CD8-positive, alpha-beta T cell (primary cell): ENCODE measurements at regions of chr20 and their contacts with region 1.

Region 1: GRCh38 chr20:50115591-50116372 is 2.8 kb upstream of the UBE2V1 start:
- DNase-seq: peak; percentile 75 to 95 (median 90)
- ATAC-seq: peak; percentile 78
- H3K4me3 ChIP-seq: peak overlapping the region; percentile 47 to 55
- H3K4me3 Mint-ChIP-seq: peak overlapping the region; percentile 87
- H3K27ac ChIP-seq: peak overlapping the region; percentile 22 to 25
- H3K27ac Mint-ChIP-seq: peak overlapping the region; percentile 84
- H3K4me1 ChIP-seq: peaks cover 39% of the 10 kb centered on the region
- H3K4me1 Mint-ChIP-seq: peaks cover 53% of the 10 kb centered on the region
- H3K27me3 ChIP-seq: no peaks in the 10 kb centered on the region
- H3K27me3 Mint-ChIP-seq: no peaks in the 10 kb centered on the region
- CTCF ChIP-seq: no peak

Region 2: DNA sequence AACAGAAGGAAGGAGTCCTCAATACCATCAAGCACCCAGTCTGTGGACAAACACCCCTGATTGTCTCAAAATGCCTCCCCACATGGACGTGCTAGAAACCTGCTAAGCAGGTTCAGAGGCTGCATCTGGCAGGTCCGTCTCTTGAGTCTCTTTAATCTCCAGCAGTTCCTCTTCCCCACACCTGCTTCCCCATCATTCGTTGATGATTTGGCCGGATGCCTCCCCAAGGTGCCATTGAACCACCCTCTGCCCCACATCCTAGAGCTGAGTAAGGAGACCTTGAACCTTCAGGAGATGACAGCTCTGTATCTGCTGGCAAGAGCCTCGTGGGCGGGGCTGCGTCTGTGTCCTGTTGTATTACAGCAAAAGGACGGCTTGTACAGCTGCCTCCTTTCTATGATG is 1467.2 kb before region 1 on chr20:
- CTCF ChIA-PET with region 1: no interaction called
- POLR2A ChIA-PET with region 1: no interaction called
- intact Hi-C with region 1: no loop called
- DNase-seq: no peak
- ATAC-seq: no peak
- H3K4me3 ChIP-seq: no peak overlapping the region
- H3K4me3 Mint-ChIP-seq: no peak overlapping the region
- H3K27ac ChIP-seq: no peak overlapping the region
- H3K27ac Mint-ChIP-seq: no peak overlapping the region
- H3K4me1 ChIP-seq: no peaks in the 10 kb centered on the region
- H3K4me1 Mint-ChIP-seq: no peaks in the 10 kb centered on the region
- H3K27me3 ChIP-seq: no peaks in the 10 kb centered on the region
- H3K27me3 Mint-ChIP-seq: no peaks in the 10 kb centered on the region
- CTCF ChIP-seq: no peak

Region 3: GRCh38 chr20:49278036-49278817 is 837.6 kb before region 1 on chr20 and contains the start of gene ZNFX1:
- CTCF ChIA-PET with region 1: no interaction called
- POLR2A ChIA-PET with region 1: no interaction called
- intact Hi-C with region 1: loop called (anchors 5 to 10 kb)
- DNase-seq: peak; percentile 96 to 99 (median 99)
- ATAC-seq: peak; percentile 83
- H3K4me3 ChIP-seq: peak within 1 kb of the TSS; percentile 71 to 84
- H3K4me3 Mint-ChIP-seq: peak within 1 kb of the TSS; percentile 96
- H3K27ac ChIP-seq: peak within 1 kb of the TSS; percentile 84 to 89
- H3K27ac Mint-ChIP-seq: peak within 1 kb of the TSS; percentile 99
- H3K4me1 ChIP-seq: peaks cover 66% of the 10 kb centered on the region
- H3K4me1 Mint-ChIP-seq: peaks cover 67% of the 10 kb centered on the region
- H3K27me3 ChIP-seq: no peaks in the 10 kb centered on the region
- H3K27me3 Mint-ChIP-seq: no peaks in the 10 kb centered on the region
- CTCF ChIP-seq: no peak
- total RNA-seq, gene ZNFX1: 53.8 to 55.0 TPM

Region 4: GRCh38 chr20:50070991-50071888 is 44.5 kb before region 1 on chr20:
- CTCF ChIA-PET with region 1: interaction called, 11 read pairs
- POLR2A ChIA-PET with region 1: no interaction called
- intact Hi-C with region 1: loop called in 1 of 2 experiments (anchors 2 kb)
- DNase-seq: peak; percentile 83 to 98 (median 91)
- ATAC-seq: peak; percentile 100
- H3K4me3 ChIP-seq: peak overlapping the region; percentile 29 to 38
- H3K4me3 Mint-ChIP-seq: peak overlapping the region; percentile 63
- H3K27ac ChIP-seq: no peak overlapping the region
- H3K27ac Mint-ChIP-seq: no peak overlapping the region
- H3K4me1 ChIP-seq: no peaks in the 10 kb centered on the region
- H3K4me1 Mint-ChIP-seq: peaks cover 4% of the 10 kb centered on the region
- H3K27me3 ChIP-seq: no peaks in the 10 kb centered on the region
- H3K27me3 Mint-ChIP-seq: no peaks in the 10 kb centered on the region
- CTCF ChIP-seq: peak; percentile 98

Region 5: GRCh38 chr20:50165684-50166554 is 50.1 kb after region 1 on chr20:
- CTCF ChIA-PET with region 1: interaction called, 291 read pairs
- POLR2A ChIA-PET with region 1: interaction called, 12 read pairs
- intact Hi-C with region 1: loop called in 1 of 2 experiments (anchors 2 kb)
- DNase-seq: peak; percentile 22 to 80 (median 72)
- ATAC-seq: peak; percentile 90
- H3K4me3 ChIP-seq: peak overlapping the region in 1 of 2 experiments; percentile 3
- H3K4me3 Mint-ChIP-seq: peak overlapping the region; percentile 50
- H3K27ac ChIP-seq: no peak overlapping the region
- H3K27ac Mint-ChIP-seq: no peak overlapping the region
- H3K4me1 ChIP-seq: peaks cover 8% of the 10 kb centered on the region
- H3K4me1 Mint-ChIP-seq: peaks cover 11% of the 10 kb centered on the region
- H3K27me3 ChIP-seq: no peaks in the 10 kb centered on the region
- H3K27me3 Mint-ChIP-seq: peaks cover 5% of the 10 kb centered on the region
- CTCF ChIP-seq: no peak

Region 6: GRCh38 chr20:50509935-50510705 is 394.3 kb after region 1 on chr20 and contains the start of gene PTPN1:
- CTCF ChIA-PET with region 1: no interaction called
- POLR2A ChIA-PET with region 1: interaction called, 3 read pairs
- intact Hi-C with region 1: loop called (anchors 1 kb)
- DNase-seq: peak; percentile 97 to 99 (median 99)
- ATAC-seq: peak; percentile 95
- H3K4me3 ChIP-seq: peak within 1 kb of the TSS; percentile 80 to 100
- H3K4me3 Mint-ChIP-seq: peak within 1 kb of the TSS; percentile 95
- H3K27ac ChIP-seq: peak within 1 kb of the TSS; percentile 91 to 94
- H3K27ac Mint-ChIP-seq: peak within 1 kb of the TSS; percentile 99
- H3K4me1 ChIP-seq: peaks cover 45% of the 10 kb centered on the region
- H3K4me1 Mint-ChIP-seq: peaks cover 52% of the 10 kb centered on the region
- H3K27me3 ChIP-seq: no peaks in the 10 kb centered on the region
- H3K27me3 Mint-ChIP-seq: no peaks in the 10 kb centered on the region
- CTCF ChIP-seq: no peak
- total RNA-seq, gene PTPN1: 96.0 to 97.5 TPM